ENCODE measurements at regions of chr2 and their contacts with region 1.

Region 1: DNA sequence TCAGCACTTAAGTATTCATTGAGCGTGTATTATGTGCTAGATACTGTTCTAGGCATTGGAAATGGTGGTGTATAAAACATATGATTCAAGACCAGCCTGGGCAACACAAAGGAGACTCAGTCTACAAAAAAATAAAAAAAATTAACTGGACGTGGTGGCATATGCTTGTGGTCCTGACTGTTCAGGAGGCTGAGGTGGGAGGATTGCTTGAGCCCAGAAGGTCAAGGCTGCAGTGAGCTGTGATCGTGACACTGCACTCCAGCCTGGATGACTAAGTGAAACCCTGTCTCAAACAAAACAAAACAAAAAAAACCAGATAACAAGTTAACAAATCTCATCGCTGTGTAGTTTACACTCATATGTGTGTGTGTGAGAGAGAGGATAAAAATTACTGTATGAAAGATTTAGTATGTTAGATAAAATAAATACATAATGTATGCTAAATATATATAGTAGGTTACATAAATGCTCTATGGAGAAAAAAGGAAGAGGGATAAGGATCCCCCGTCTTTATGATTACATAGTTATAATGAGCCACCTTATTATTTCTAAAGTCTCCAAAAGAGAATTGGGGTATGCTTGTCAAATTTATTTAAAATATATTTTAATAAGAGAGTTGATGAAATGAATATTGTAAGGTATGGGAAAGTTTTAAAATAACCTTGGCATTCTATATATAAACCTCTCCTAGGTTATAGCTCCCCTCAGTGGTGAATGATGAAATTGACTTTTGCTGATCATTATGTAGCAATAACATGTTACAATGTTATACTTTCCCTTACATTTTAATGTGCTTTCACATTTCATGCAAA is 69.2 kb downstream of the EHBP1 start:
- DNase-seq: no peak
- H3K4me3 ChIP-seq: no peak overlapping the region
- H3K27ac ChIP-seq: no peak overlapping the region
- H3K27me3 ChIP-seq: no peaks in the 10 kb centered on the region
- CTCF ChIP-seq: peak; percentile 73

Region 2: GRCh38 chr2:62467475-62468321 is 307.1 kb before region 1 on chr2:
- CTCF ChIA-PET with region 1: interaction called, 11 read pairs
- POLR2A ChIA-PET with region 1: no interaction called
- DNase-seq: no peak
- H3K4me3 ChIP-seq: no peak overlapping the region
- H3K27ac ChIP-seq: no peak overlapping the region
- H3K27me3 ChIP-seq: peaks cover 3% of the 10 kb centered on the region
- CTCF ChIP-seq: 0 out of 2 replicates have a peak, but pooled peaks have one; percentile 8

Region 3: DNA sequence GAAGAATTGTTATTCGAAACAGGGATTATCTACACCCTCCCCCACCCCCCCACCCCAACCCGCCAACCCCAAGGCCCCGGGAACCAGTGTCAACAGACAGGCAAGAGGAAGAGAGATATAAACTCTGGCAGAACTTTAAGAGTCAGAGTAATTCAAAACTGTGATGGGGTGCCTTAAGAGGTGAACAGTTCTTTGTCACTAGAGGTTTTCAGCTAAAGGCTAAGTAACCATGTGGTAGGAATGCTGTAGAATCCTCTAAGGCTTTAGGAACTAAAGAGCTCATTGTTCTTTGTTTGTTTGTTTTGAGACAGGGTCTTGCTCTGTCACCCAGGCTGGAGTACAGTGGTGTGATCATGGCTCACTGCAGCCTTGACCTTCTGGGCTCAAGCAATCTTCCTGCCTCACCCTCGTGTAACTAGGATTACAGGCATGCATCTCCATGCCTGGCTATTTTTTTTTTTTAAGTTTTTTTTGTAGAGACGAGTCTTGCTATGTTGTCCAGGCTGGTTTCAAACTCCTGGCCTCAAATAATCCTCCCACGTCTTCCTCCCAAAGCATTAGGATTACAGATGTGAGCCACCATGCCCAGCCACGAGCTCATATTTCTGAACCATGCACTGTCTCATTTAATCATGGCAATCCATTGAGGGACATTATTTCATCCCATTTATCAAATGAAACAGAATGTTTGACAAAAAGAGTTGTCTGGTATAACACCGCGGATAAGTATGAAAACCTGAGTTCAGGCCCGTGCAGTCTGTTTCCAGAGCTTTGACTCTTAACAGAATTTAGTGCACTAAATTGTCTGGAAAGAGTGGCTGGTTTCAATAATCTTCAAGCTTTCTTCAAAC is 248.0 kb before region 1 on chr2:
- CTCF ChIA-PET with region 1: interaction called, 16 read pairs
- POLR2A ChIA-PET with region 1: no interaction called
- DNase-seq: no peak
- H3K4me3 ChIP-seq: no peak overlapping the region
- H3K27ac ChIP-seq: no peak overlapping the region
- H3K27me3 ChIP-seq: no peaks in the 10 kb centered on the region
- CTCF ChIP-seq: no peak

Measured in AG04450 (cell line).